Ovary (tissue), 10 donors: ENCODE measurements at regions of chr16 and their contacts with region 1.

Region 1: GRCh38 chr16:17467923-17468540 is 2.7 kb downstream of the XYLT1 start:
- DNase-seq: peak; percentile 66 to 81 (median 77)
- H3K4me3 ChIP-seq: peak overlapping the region; percentile 70
- H3K27ac ChIP-seq: no peak overlapping the region
- H3K4me1 ChIP-seq: no peaks in the 10 kb centered on the region
- H3K27me3 ChIP-seq: no peaks in the 10 kb centered on the region
- CTCF ChIP-seq: peak in 2 of 3 donors; percentile 38 to 59
- EP300 ChIP-seq: no peak
- POLR2A ChIP-seq: no peak

Region 2: GRCh38 chr16:17211797-17212196 is 256.2 kb before region 1 on chr16:
- intact Hi-C with region 1: loop called in 2 of 4 experiments (anchors 5 to 10 kb)
- DNase-seq: no peak
- H3K4me3 ChIP-seq: no peak overlapping the region
- H3K27ac ChIP-seq: no peak overlapping the region
- H3K4me1 ChIP-seq: no peaks in the 10 kb centered on the region
- H3K27me3 ChIP-seq: no peaks in the 10 kb centered on the region
- CTCF ChIP-seq: no peak
- EP300 ChIP-seq: no peak
- POLR2A ChIP-seq: no peak

Region 3: GRCh38 chr16:17266608-17267313 is 201.3 kb before region 1 on chr16:
- intact Hi-C with region 1: loop called in 1 of 4 experiments (anchors 10 kb)
- DNase-seq: peak; percentile 77 to 87 (median 84)
- H3K4me3 ChIP-seq: no peak overlapping the region
- H3K27ac ChIP-seq: peak overlapping the region in 1 of 2 donors; percentile 51
- H3K4me1 ChIP-seq: peaks cover 22% of the 10 kb centered on the region
- H3K27me3 ChIP-seq: no peaks in the 10 kb centered on the region
- CTCF ChIP-seq: no peak
- EP300 ChIP-seq: no peak
- POLR2A ChIP-seq: no peak

Region 4: DNA sequence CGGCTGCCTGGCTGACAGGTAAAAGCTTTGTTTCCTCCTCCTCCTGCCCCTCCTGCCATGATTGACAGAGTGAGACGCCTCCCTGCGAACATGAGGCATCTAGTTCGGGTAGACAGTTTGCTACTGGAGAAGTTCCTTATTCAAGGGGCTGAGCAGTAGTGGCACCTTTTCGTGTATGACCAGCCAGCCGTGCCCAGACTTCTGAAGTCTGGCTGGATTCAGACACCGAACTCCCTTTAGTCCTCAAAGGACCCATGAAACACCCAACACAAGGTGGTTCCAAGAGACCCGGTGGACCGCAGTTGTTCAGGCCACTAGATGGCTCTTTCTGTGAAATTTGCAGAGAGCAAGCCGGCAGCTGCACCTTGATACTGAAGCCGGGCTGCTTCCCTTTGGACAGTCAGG is 190.1 kb before region 1 on chr16:
- intact Hi-C with region 1: loop called in 2 of 4 experiments (anchors 5 kb)
- DNase-seq: peak; percentile 46 to 60 (median 48)
- H3K4me3 ChIP-seq: no peak overlapping the region
- H3K27ac ChIP-seq: no peak overlapping the region
- H3K4me1 ChIP-seq: peaks cover 4% of the 10 kb centered on the region
- H3K27me3 ChIP-seq: no peaks in the 10 kb centered on the region
- CTCF ChIP-seq: peak in 1 of 3 donors; percentile 16
- EP300 ChIP-seq: no peak
- POLR2A ChIP-seq: no peak

Region 5: DNA sequence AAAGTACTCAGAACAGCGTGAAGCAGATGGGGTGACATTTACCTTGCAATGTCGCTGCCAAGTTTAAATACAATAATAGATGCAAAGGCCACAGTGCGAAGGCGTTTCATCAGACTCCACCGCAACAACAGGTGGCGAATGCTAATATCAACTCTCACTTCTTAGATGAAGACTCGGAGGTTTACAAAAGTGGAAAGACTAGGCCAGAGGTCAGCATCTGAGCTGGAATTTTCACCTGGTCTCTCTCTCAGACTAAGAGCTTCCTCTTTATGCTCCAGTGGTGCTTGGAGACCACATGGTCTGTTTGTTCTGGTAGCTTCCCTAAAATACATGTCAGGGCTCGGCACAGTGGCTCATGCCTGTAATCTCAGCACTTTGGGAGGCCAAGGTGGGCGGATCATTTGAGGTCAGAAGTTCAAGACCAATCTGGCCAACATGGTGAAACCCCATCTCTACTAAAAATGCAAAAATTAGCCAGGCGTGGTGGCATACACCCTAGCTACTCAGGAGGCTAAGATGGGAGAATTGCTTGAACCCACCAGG is 166.4 kb before region 1 on chr16:
- intact Hi-C with region 1: loop called in 1 of 4 experiments (anchors 10 kb)
- DNase-seq: no peak
- H3K4me3 ChIP-seq: no peak overlapping the region
- H3K27ac ChIP-seq: no peak overlapping the region
- H3K4me1 ChIP-seq: peaks cover 14% of the 10 kb centered on the region
- H3K27me3 ChIP-seq: no peaks in the 10 kb centered on the region
- CTCF ChIP-seq: no peak
- EP300 ChIP-seq: no peak
- POLR2A ChIP-seq: no peak

Region 6: GRCh38 chr16:17343028-17343427 is 125.0 kb before region 1 on chr16:
- intact Hi-C with region 1: loop called in 1 of 4 experiments (anchors 10 kb)
- DNase-seq: no peak
- H3K4me3 ChIP-seq: no peak overlapping the region
- H3K27ac ChIP-seq: no peak overlapping the region
- H3K4me1 ChIP-seq: peaks cover 4% of the 10 kb centered on the region
- H3K27me3 ChIP-seq: no peaks in the 10 kb centered on the region
- CTCF ChIP-seq: no peak
- EP300 ChIP-seq: no peak
- POLR2A ChIP-seq: no peak

Region 7: GRCh38 chr16:17668386-17668785 is 200.4 kb after region 1 on chr16:
- intact Hi-C with region 1: no loop called
- DNase-seq: no peak
- H3K4me3 ChIP-seq: no peak overlapping the region
- H3K27ac ChIP-seq: no peak overlapping the region
- H3K4me1 ChIP-seq: no peaks in the 10 kb centered on the region
- H3K27me3 ChIP-seq: no peaks in the 10 kb centered on the region
- CTCF ChIP-seq: no peak
- EP300 ChIP-seq: no peak
- POLR2A ChIP-seq: no peak